Naive thymus-derived CD4-positive, alpha-beta T cell (primary cell): ENCODE measurements at regions of chr13 and their contacts with region 1.

Region 1: GRCh38 chr13:48532506-48533499 is at the start of gene RCBTB2:
- DNase-seq: peak; percentile 97 to 100 (median 99)
- ATAC-seq: peak; percentile 92
- H3K4me3 ChIP-seq: peak within 1 kb of the TSS; percentile 80
- H3K4me3 Mint-ChIP-seq: peak within 1 kb of the TSS; percentile 83 to 99 (median 94)
- H3K27ac ChIP-seq: peak within 1 kb of the TSS; percentile 96
- H3K27ac Mint-ChIP-seq: peak within 1 kb of the TSS; percentile 98 to 100 (median 99)
- H3K4me1 ChIP-seq: peaks cover 10 to 16% of the 10 kb centered on the region in 2 donors
- H3K4me1 Mint-ChIP-seq: peaks cover 11 to 44% (median 31%) of the 10 kb centered on the region in 7 donors
- H3K27me3 ChIP-seq: no peaks in the 10 kb centered on the region
- H3K27me3 Mint-ChIP-seq: peaks cover 0 to 18% (median 0%) of the 10 kb centered on the region in 5 donors
- total RNA-seq, gene RCBTB2: 7.6 to 17.8 (median 10.1) TPM

Region 2: DNA sequence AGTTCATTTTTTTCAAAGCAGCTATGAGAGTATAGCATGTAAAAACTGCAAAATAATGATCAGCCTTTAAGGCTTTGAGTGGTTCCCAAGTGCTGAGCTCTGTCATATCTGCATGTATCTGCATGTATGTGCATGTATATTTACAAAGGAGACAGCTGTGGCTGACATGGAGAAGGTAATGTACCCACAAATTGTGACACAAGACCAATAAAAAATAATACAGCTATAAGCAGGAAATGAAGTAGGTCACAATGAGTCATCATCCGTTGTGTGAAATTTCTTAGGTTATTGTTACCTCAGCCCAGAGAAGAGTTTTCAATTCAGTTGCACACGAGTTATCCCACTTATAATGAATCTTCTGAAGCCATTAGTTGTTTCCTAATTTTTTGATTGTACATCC is 377.0 kb before region 1 on chr13:
- CTCF ChIA-PET with region 1: no interaction called
- POLR2A ChIA-PET with region 1: interaction called, 4 read pairs
- intact Hi-C with region 1: loop called (anchors 1 to 10 kb)
- DNase-seq: peak in 7 of 9 donors; percentile 49 to 81 (median 74)
- ATAC-seq: peak; percentile 88
- H3K4me3 ChIP-seq: peak overlapping the region; percentile 34
- H3K4me3 Mint-ChIP-seq: peak overlapping the region; percentile 62 to 83 (median 74)
- H3K27ac ChIP-seq: peak overlapping the region; percentile 75
- H3K27ac Mint-ChIP-seq: peak overlapping the region; percentile 89 to 99 (median 92)
- H3K4me1 ChIP-seq: peaks cover 28 to 64% of the 10 kb centered on the region in 2 donors
- H3K4me1 Mint-ChIP-seq: peaks cover 47 to 89% (median 78%) of the 10 kb centered on the region in 7 donors
- H3K27me3 ChIP-seq: no peaks in the 10 kb centered on the region
- H3K27me3 Mint-ChIP-seq: no peaks in the 10 kb centered on the region

Region 3: GRCh38 chr13:48492470-48493065 is 40.2 kb before region 1 on chr13:
- CTCF ChIA-PET with region 1: interaction called, 5 read pairs
- POLR2A ChIA-PET with region 1: interaction called, 79 read pairs
- intact Hi-C with region 1: loop called (anchors 1 kb)
- DNase-seq: peak; percentile 38 to 79 (median 74)
- ATAC-seq: peak; percentile 91
- H3K4me3 ChIP-seq: peak overlapping the region; percentile 73
- H3K4me3 Mint-ChIP-seq: no peak overlapping the region
- H3K27ac ChIP-seq: peak overlapping the region; percentile 74
- H3K27ac Mint-ChIP-seq: no peak overlapping the region
- H3K4me1 ChIP-seq: peaks cover 67% of the 10 kb centered on the region in 2 donors
- H3K4me1 Mint-ChIP-seq: peaks cover 1 to 55% (median 34%) of the 10 kb centered on the region in 7 donors
- H3K27me3 ChIP-seq: no peaks in the 10 kb centered on the region
- H3K27me3 Mint-ChIP-seq: no peaks in the 10 kb centered on the region

Region 4: GRCh38 chr13:48515732-48516131 is 17.1 kb before region 1 on chr13:
- CTCF ChIA-PET with region 1: no interaction called
- POLR2A ChIA-PET with region 1: interaction called, 14 read pairs
- intact Hi-C with region 1: no loop called
- DNase-seq: no peak
- ATAC-seq: no peak
- H3K4me3 ChIP-seq: no peak overlapping the region
- H3K4me3 Mint-ChIP-seq: no peak overlapping the region
- H3K27ac ChIP-seq: no peak overlapping the region
- H3K27ac Mint-ChIP-seq: no peak overlapping the region
- H3K4me1 ChIP-seq: peaks cover 0 to under 1% of the 10 kb centered on the region in 2 donors
- H3K4me1 Mint-ChIP-seq: peaks cover 0 to 5% (median 1%) of the 10 kb centered on the region in 7 donors
- H3K27me3 ChIP-seq: no peaks in the 10 kb centered on the region
- H3K27me3 Mint-ChIP-seq: peaks cover 0 to 21% (median 0%) of the 10 kb centered on the region in 5 donors

Region 5: DNA sequence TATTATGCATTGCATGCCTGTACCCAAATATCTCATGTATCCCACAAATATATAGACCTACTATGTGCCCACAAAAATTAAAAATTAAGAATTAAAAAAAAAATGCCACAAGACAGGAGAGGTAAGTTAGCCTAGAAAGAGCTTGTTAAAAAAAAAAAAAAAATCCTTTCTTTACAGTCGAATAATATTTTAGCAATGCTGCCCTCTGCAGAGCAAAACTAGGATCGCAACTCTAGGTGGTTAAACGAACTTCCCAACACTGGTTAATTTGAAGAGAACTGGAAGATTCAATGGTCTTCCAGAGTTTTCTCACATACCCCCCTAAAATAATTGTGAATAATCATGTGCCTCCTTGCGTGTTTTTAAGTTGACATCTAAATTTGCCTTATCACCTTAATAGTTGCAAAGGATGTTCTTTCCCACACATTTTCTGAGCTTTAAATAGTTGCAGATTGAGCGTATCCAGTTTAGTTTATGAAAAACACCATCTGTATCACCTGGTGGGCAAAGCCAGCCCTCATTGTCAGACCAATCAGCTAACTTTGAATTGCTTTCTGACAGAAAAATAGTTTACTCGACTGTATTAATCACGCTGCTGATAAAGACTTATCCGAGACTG is 47.5 kb after region 1 on chr13:
- CTCF ChIA-PET with region 1: interaction called, 5 read pairs
- POLR2A ChIA-PET with region 1: interaction called, 27 read pairs
- intact Hi-C with region 1: loop called in 1 of 2 experiments (anchors 1 kb)
- DNase-seq: peak; percentile 44 to 79 (median 61)
- ATAC-seq: peak; percentile 84
- H3K4me3 ChIP-seq: no peak overlapping the region
- H3K4me3 Mint-ChIP-seq: no peak overlapping the region
- H3K27ac ChIP-seq: no peak overlapping the region
- H3K27ac Mint-ChIP-seq: no peak overlapping the region
- H3K4me1 ChIP-seq: peaks cover 0 to 6% of the 10 kb centered on the region in 2 donors
- H3K4me1 Mint-ChIP-seq: peaks cover 0 to 25% (median 6%) of the 10 kb centered on the region in 7 donors
- H3K27me3 ChIP-seq: no peaks in the 10 kb centered on the region
- H3K27me3 Mint-ChIP-seq: peaks cover 0 to 68% (median 3%) of the 10 kb centered on the region in 5 donors

Region 6: GRCh38 chr13:48954081-48954480 is 421.3 kb after region 1 on chr13:
- CTCF ChIA-PET with region 1: no interaction called
- POLR2A ChIA-PET with region 1: no interaction called
- intact Hi-C with region 1: no loop called
- DNase-seq: no peak
- ATAC-seq: no peak
- H3K4me3 ChIP-seq: no peak overlapping the region
- H3K4me3 Mint-ChIP-seq: no peak overlapping the region
- H3K27ac ChIP-seq: no peak overlapping the region
- H3K27ac Mint-ChIP-seq: no peak overlapping the region
- H3K4me1 ChIP-seq: no peaks in the 10 kb centered on the region
- H3K4me1 Mint-ChIP-seq: peaks cover 0 to 2% (median 0%) of the 10 kb centered on the region in 7 donors
- H3K27me3 ChIP-seq: no peaks in the 10 kb centered on the region
- H3K27me3 Mint-ChIP-seq: peaks cover 0 to 34% (median 5%) of the 10 kb centered on the region in 5 donors